ENCODE measurements at regions of chr7 and their contacts with region 1.

Region 1: DNA sequence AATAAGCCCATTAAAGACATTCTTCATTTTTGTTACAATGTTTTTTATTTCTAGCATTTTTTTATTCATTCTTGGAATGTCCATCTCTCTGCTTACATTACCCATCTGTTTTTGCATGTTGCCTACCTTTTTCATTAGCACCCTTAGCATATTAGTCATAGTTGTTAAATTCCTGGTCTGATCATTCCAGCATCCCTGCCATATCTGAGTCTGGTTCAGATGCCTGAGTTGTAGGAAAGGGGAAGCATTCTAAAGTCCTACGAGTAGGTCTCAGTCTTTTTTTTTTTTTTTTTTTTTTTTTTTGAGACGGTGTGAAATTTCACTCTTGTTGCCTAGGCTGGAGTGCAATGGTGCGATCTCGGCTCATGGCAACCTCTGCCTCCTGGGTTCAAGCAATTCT is 19.7 kb upstream of the NRF1 start:
- DNase-seq: peak in 1 of 2 experiments; percentile 53
- H3K4me3 ChIP-seq: no peak overlapping the region
- H3K27ac ChIP-seq: peak overlapping the region; percentile 72; the same call in 1 of the 2 replicates
- H3K4me1 ChIP-seq: peaks cover 23% of the 10 kb centered on the region
- H3K27me3 ChIP-seq: no peaks in the 10 kb centered on the region
- CTCF ChIP-seq: no peak

Region 2: GRCh38 chr7:129494041-129494440 is 97.8 kb before region 1 on chr7:
- CTCF ChIA-PET with region 1: no interaction called
- POLR2A ChIA-PET with region 1: interaction called, 10 read pairs
- intact Hi-C with region 1: no loop called
- DNase-seq: no peak
- H3K4me3 ChIP-seq: no peak overlapping the region
- H3K27ac ChIP-seq: no peak overlapping the region
- H3K4me1 ChIP-seq: no peaks in the 10 kb centered on the region
- H3K27me3 ChIP-seq: no peaks in the 10 kb centered on the region
- CTCF ChIP-seq: no peak

Measured in PC-9 (cell line).